Calu3 (cell line): ENCODE measurements at regions of chr16 and their contacts with region 1.

Region 1: GRCh38 chr16:22188595-22189442 is 17.3 kb upstream of the EEF2K start:
- DNase-seq: peak; percentile 86
- H3K4me3 Mint-ChIP-seq: no peak overlapping the region
- H3K27ac Mint-ChIP-seq: no peak overlapping the region
- H3K4me1 Mint-ChIP-seq: peaks cover 39% of the 10 kb centered on the region
- H3K27me3 Mint-ChIP-seq: no peaks in the 10 kb centered on the region
- CTCF ChIP-seq: peak; percentile 78

Region 2: DNA sequence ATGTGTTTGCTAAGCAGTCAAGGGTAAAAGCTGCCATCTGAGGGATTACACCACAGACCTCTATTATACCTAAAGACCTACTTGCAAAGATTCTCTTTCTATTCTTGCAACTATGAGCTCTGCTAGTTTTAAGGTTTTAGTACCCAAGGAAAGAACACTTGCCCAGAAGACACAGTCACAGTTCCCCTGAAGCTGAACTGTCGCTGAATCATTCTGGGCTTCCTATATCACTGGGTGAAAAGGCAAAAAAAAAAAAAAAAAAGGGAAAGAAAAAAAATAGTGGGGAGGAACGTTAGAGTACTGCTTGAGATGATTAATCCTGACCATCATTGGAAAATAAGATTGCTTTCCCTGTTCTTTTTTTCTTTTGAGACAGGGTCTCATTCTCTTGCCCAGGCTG is 1250.4 kb before region 1 on chr16:
- CTCF ChIA-PET with region 1: no interaction called
- intact Hi-C with region 1: no loop called
- DNase-seq: no peak
- H3K4me3 Mint-ChIP-seq: no peak overlapping the region
- H3K27ac Mint-ChIP-seq: no peak overlapping the region
- H3K4me1 Mint-ChIP-seq: peaks cover 8% of the 10 kb centered on the region
- H3K27me3 Mint-ChIP-seq: no peaks in the 10 kb centered on the region
- CTCF ChIP-seq: no peak

Region 3: DNA sequence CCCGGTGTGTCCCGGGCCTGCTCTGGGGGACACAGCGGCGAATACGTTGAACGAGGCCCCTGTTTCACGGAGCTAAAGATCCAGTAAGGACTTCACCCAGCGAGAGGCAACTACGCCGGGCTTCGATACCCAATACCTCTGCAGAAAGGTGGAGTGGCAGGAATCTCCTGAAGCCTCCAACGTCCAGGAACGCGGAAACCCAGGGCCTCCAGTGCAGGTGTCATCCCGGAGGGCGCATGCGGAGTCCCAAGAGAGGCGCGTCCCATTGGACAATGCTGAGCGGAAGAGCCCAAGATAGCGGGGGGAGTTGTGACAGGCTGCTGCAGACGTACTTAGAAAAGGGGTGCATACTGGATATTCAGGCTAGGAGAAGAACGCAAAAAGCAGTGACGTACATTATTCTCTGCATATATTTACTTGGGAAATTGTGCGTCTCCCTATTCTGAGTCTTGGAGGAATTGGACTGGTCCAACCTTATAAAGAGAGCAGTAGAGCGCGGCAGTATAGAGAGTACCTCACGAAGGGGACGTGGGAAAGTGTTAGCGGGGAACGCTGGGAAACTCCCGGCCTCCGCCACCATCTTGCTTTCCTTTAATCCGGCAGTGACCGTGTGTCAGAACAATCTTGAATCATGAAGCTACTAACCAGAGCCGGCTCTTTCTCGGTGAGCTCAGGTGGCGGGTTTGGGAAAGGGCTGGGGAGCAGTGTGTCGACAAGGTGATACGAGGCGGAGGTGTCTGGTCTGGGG is 235.9 kb before region 1 on chr16 and contains the start of gene UQCRC2:
- CTCF ChIA-PET with region 1: interaction called, 5 read pairs
- intact Hi-C with region 1: loop called (anchors 1 kb)
- DNase-seq: peak; percentile 93
- H3K4me3 Mint-ChIP-seq: peak within 1 kb of the TSS; percentile 86
- H3K27ac Mint-ChIP-seq: peak within 1 kb of the TSS; percentile 99
- H3K4me1 Mint-ChIP-seq: peaks cover 19% of the 10 kb centered on the region
- H3K27me3 Mint-ChIP-seq: no peaks in the 10 kb centered on the region
- CTCF ChIP-seq: no peak
- total RNA-seq, gene UQCRC2: 328 and 343 TPM in 2 replicates

Region 4: DNA sequence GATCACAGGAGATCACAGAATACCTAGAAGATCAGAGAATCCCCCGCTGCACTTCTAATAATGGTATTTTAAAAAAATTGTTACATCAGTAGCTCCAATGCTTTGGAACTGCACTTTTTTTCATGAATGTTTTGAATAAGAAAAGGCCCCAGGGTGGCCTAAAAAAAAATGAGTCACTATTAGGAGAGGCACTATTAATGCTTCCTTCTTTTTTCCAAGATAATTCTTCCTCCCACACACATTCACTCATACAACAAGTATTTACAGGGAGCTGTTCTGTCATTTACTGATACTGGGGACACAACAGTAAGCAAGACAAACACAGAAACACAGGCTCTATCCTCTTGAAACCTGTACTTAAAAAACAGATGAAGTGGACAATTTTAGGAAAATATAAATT is 187.2 kb before region 1 on chr16:
- CTCF ChIA-PET with region 1: interaction called, 22 read pairs
- intact Hi-C with region 1: loop called (anchors 2 kb)
- DNase-seq: no peak
- H3K4me3 Mint-ChIP-seq: no peak overlapping the region
- H3K27ac Mint-ChIP-seq: no peak overlapping the region
- H3K4me1 Mint-ChIP-seq: peaks cover 18% of the 10 kb centered on the region
- H3K27me3 Mint-ChIP-seq: no peaks in the 10 kb centered on the region
- CTCF ChIP-seq: no peak

Region 5: GRCh38 chr16:22386976-22387375 is 198.2 kb after region 1 on chr16:
- CTCF ChIA-PET with region 1: no interaction called
- intact Hi-C with region 1: no loop called
- DNase-seq: no peak
- H3K4me3 Mint-ChIP-seq: no peak overlapping the region
- H3K27ac Mint-ChIP-seq: peak overlapping the region; percentile 37
- H3K4me1 Mint-ChIP-seq: peaks cover 23% of the 10 kb centered on the region
- H3K27me3 Mint-ChIP-seq: no peaks in the 10 kb centered on the region
- CTCF ChIP-seq: no peak